Activated B cell treated with CpG ODN at 0.5 μM for 24 hours (primary cell): ENCODE measurements at regions of chr2 and their contacts with region 1.

Region 1: GRCh38 chr2:144430722-144431391 is 89.1 kb downstream of the ZEB2 start:
- DNase-seq: no peak
- ATAC-seq: peak; percentile 56
- H3K4me3 Mint-ChIP-seq: no peak overlapping the region
- H3K27ac Mint-ChIP-seq: no peak overlapping the region
- H3K4me1 Mint-ChIP-seq: peaks cover 44% of the 10 kb centered on the region
- H3K27me3 Mint-ChIP-seq: no peaks in the 10 kb centered on the region
- CTCF ChIP-seq: no peak

Region 2: GRCh38 chr2:144449028-144449406 is 18.2 kb after region 1 on chr2:
- CTCF ChIA-PET with region 1: interaction called, 4 read pairs
- POLR2A ChIA-PET with region 1: no interaction called
- intact Hi-C with region 1: loop called (anchors 2 kb)
- DNase-seq: no peak
- ATAC-seq: peak; percentile 65
- H3K4me3 Mint-ChIP-seq: peak overlapping the region; percentile 62
- H3K27ac Mint-ChIP-seq: peak overlapping the region; percentile 42
- H3K4me1 Mint-ChIP-seq: peaks cover 81% of the 10 kb centered on the region
- H3K27me3 Mint-ChIP-seq: no peaks in the 10 kb centered on the region
- CTCF ChIP-seq: no peak

Region 3: DNA sequence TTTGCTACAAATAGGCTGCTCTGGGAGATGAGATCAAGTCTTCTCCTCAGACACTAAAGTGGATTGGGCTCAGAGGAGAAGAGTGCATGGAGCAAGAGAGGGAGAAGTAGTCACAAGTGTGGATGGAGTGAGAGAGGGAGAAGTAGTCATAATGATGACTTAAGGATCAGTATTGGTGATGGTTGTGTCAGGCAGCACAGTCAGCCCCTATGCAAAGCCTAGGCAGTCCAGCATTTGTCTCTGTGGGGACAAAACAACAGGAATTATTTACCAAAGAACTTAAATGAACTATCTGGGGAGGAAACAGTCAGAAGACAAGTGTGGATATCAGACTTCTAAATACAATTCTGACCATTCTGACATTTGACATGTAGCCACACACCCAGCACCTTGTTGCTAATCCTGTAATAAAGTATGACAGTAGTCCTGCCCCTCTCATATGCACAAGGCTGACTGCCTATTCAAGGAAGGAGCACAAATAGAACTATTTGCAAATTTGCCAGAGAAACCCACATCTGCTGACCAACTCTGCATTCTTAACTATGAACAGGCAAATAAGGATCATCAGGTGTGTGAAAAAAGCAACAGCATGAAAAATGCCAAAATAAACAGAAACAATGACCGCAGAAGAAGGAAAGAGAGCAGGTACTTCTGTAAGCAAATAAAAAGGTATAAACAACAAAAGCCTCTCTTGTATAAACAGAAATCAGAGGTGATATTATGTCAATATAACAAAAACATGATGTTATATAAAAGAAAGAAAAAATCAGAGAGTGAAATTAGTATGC is 1816.1 kb after region 1 on chr2:
- CTCF ChIA-PET with region 1: no interaction called
- POLR2A ChIA-PET with region 1: no interaction called
- intact Hi-C with region 1: no loop called
- DNase-seq: no peak
- ATAC-seq: no peak
- H3K4me3 Mint-ChIP-seq: no peak overlapping the region
- H3K27ac Mint-ChIP-seq: no peak overlapping the region
- H3K4me1 Mint-ChIP-seq: peaks cover 2% of the 10 kb centered on the region
- H3K27me3 Mint-ChIP-seq: no peaks in the 10 kb centered on the region
- CTCF ChIP-seq: no peak